BJ (cell line): ENCODE measurements at regions of chr19 and their contacts with region 1.

Region 1: DNA sequence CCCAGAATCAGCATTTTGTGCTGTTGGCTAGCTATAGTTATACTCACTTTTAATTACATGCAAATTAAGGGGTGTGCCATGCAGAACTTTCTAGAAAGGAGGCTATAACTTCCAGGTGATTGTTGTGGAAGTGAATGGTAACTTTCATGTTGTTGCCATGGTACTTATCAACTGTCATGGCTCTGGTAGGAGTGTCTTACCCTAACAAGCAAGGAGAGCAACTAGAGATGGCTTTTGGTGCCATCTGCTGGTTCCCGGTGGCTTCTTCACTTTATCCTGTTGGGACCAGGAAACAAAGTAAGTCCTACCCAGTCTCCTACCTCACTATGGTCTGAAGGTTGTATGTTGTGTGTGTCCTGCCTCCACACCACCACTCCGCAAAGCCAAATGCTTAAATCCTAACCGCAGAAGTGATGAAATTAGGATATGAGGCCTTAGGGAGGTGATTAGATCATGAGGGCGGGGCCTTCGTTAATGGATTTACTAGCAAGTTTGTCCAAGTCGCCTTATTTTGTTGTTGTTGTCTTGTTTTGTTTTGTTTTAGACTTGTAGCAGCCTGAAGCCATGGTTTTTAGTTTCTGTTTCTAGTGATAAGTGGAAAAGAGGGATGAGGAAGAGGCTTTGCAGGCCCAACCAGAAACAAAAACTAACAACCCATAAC is 22.6 kb downstream of the FBXL12 start:
- DNase-seq: peak; percentile 69
- H3K4me3 ChIP-seq: no peak overlapping the region
- H3K27me3 ChIP-seq: no peaks in the 10 kb centered on the region
- CTCF ChIP-seq: peak; percentile 80

Region 2: GRCh38 chr19:9205501-9206113 is 590.6 kb before region 1 on chr19:
- CTCF ChIA-PET with region 1: interaction called, 17 read pairs
- POLR2A ChIA-PET with region 1: no interaction called
- DNase-seq: peak; percentile 2
- H3K4me3 ChIP-seq: peak overlapping the region; percentile 43
- H3K27me3 ChIP-seq: no peaks in the 10 kb centered on the region
- CTCF ChIP-seq: peak; percentile 91

Region 3: DNA sequence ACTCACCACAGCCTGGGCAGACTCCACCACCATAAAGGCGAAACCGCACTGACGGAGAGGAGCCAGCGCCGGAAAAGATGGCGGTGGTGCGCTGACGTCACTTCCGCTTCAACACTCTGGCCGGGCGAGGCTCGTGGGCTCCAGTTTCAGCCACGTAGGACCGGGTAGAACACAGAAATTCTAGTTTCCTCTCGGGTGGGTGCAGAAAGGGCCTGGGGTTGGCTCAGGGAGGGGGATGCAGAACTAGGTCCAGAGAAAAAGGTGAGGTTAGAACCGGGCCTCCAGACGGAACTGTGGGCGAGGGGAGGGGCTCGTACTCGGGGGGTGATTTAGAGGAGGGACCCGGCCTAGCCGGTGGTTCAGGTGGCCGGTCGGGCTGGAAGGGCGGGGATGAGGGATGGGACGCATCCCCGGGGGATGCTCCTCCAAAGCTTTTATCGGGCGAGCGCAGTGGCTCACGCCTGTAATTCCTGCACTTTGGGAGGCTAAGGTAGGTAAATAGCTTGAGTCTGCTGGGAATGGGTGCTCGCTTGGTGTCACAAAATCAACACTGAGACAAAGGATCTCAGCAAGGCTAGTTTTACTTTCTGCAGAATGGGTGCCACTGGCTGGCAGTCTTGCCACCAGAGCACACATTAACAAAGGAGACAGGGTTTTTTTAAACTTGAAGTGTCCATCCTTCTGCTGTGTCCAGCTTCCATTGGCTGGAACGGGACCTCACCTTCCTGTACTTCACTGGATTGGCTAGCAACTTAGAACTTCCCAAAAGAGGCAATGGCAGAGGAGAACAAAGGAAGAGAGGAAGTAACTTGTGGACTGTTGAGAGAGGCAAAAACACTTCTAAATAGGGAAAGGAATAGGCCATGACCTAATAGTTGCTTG is 174.8 kb before region 1 on chr19 and contains the start of gene ZNF561:
- CTCF ChIA-PET with region 1: interaction called, 21 read pairs
- POLR2A ChIA-PET with region 1: no interaction called
- DNase-seq: peak; percentile 32
- H3K4me3 ChIP-seq: peak within 1 kb of the TSS; percentile 81
- H3K27me3 ChIP-seq: no peaks in the 10 kb centered on the region
- CTCF ChIP-seq: no peak
- polyA plus RNA-seq, gene ZNF561: 31.4 and 42.3 TPM in 2 replicates

Region 4: DNA sequence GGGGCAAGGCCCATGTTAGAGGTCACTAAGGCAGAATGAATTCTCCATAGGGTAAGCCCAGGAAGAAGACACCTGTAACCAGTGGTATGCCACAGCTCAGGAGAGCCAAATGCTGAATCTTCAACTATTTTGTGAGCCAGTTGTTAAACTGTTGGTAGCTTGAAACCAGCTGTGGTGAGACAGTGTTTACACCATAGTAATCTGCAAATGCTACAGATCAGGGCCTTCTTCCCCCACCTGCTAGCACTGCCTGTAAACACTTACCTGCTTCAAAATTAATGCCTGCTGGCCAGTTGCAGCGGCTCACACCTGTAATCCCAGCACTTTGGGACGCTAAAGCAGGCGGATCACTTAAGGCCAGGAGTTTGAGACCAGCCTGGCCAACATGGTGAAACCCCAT is 10.6 kb after region 1 on chr19:
- CTCF ChIA-PET with region 1: interaction called, 11 read pairs
- POLR2A ChIA-PET with region 1: no interaction called
- DNase-seq: no peak
- H3K4me3 ChIP-seq: no peak overlapping the region
- H3K27me3 ChIP-seq: no peaks in the 10 kb centered on the region
- CTCF ChIP-seq: no peak